ENCODE measurements at regions of chr16 and their contacts with region 1.

Region 1: DNA sequence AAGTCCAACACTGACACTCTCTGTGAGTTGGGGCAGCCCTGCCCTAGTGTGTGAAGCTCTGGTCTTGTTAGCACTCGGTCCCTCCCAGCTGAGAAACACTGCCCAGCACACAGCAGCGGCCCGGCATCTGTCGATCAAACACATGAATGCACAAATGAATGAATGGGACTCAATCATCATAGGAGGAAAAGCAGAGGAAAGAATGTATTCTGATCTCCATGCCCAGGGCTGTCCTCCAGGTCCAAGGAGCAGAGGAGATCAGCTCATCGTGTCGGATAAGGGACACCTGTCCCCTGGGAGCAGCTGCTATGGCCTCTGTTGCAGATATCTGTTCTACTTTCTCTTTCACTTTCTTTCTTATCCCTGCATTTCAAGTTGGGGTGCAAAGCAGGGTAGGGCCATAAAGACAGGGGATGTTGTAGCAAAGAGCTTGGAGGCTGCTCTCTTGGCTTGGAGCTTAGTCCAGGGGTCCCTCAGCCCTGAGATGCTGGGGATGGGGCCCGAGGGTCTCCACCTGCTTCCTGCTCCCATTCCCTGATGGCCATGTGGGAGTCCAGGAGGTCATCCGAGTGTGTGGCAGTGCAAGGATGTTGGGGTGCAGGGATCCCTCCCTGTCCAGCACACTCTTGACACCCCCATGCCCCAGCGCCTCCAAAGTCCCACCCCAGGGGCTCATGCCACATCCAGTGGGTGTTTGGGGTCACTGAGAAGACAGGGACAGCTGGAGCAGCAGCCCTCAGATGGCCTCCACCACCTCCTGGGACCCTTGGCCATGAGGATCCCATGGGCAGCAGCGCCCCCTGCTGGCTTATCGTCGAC is 88.2 kb downstream of the IRF8 start:
- DNase-seq: peak; percentile 50
- ATAC-seq: peak; percentile 51
- H3K4me3 Mint-ChIP-seq: no peak overlapping the region
- H3K27ac Mint-ChIP-seq: peak overlapping the region; percentile 69
- H3K4me1 Mint-ChIP-seq: peaks cover 55% of the 10 kb centered on the region
- H3K27me3 Mint-ChIP-seq: no peaks in the 10 kb centered on the region

Region 2: DNA sequence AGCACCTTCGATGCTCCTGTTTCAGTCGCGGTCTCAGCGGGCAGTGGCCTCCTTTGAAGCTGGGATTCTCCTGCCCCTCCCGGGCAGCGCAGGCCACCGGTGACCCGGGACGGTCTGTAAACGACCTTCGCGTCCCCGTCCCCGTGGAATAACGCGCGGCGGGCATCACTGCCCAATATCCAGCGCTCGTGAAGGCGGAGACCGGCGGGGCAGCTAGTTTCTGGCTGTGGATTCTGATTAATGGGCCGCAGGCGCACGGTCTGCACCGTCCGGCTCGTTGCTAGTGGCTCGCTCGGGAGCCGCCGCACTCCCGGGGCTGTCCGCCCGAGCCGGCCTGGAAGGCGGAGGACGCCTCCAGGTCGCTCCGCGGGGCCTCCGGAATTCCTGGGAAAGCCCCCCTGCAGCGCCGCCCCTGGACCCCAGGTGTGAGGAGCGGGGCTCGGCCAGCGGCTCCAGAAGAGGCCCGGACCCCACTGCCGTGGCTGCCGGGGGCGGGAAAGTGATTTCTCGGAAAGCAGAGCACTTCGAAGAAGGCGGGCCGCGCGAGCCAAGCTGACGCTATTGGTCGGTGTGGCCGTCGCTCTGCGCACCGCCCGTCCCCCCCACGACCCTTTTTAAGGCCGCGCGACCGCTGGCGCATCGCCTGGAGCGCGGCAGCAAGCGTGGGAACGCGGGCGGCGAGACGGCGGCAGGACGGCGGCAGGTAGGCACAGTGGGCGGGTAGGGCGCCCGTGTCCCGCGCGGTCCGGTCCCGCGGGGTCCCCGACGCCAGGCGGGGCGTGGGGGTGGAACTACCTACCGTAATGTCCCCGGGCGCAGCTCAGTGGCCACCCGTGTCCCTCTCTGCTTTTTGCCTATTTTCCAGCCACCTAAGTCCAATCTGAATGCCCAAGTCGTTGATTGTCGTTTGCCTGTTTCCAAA is 88.4 kb before region 1 on chr16 and contains the start of gene IRF8:
- CTCF ChIA-PET with region 1: interaction called, 20 read pairs
- POLR2A ChIA-PET with region 1: interaction called, 3 read pairs
- DNase-seq: peak; percentile 84
- ATAC-seq: peak; percentile 85
- H3K4me3 Mint-ChIP-seq: peak within 1 kb of the TSS; percentile 88
- H3K27ac Mint-ChIP-seq: peak within 1 kb of the TSS; percentile 76
- H3K4me1 Mint-ChIP-seq: peaks cover 50% of the 10 kb centered on the region
- H3K27me3 Mint-ChIP-seq: peaks cover 8% of the 10 kb centered on the region
- total RNA-seq, gene IRF8: 22.9 to 24.0 TPM

Region 3: DNA sequence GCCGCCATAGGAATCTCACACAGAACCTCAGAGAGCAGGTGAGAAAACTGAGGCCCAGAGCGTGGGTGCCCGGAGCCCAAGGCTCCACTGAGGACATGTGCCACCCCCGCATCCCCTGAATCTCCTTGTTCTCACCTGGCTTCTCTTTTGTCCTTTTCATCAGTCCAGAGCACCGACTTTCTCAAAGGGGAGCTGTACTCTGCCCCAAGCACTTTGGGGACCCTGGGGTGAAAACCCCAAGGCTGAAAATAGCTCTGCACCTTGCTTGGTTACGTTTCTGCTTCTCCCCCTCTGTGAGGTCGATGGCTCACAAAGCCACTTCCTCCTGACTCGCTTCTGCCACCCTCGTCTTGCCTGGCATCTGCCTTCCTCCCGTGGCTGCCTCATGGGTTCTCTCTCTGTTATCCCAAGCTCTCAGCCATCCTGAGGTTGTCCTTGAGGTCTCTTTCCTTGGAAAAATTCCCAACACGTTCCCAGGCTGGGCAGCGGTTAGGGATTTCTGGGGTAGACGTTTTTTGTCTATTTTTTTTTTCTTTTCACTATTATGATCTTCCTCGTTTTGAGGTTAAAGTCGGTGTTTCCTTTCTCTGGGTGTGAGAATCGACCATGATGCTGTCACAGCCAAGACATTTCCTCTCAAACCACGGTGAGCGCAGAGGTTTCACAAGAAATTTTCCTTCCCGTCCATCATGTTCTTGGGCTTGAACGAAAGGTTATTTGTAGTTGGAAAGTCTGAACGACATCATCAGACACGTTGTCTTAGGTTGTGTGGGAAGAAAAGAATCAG is 51.0 kb before region 1 on chr16:
- CTCF ChIA-PET with region 1: interaction called, 13 read pairs
- POLR2A ChIA-PET with region 1: interaction called, 3 read pairs
- DNase-seq: peak; percentile 86
- ATAC-seq: peak; percentile 92
- H3K4me3 Mint-ChIP-seq: peak overlapping the region; percentile 80
- H3K27ac Mint-ChIP-seq: peak overlapping the region; percentile 98
- H3K4me1 Mint-ChIP-seq: peaks cover 45% of the 10 kb centered on the region
- H3K27me3 Mint-ChIP-seq: no peaks in the 10 kb centered on the region

Region 4: DNA sequence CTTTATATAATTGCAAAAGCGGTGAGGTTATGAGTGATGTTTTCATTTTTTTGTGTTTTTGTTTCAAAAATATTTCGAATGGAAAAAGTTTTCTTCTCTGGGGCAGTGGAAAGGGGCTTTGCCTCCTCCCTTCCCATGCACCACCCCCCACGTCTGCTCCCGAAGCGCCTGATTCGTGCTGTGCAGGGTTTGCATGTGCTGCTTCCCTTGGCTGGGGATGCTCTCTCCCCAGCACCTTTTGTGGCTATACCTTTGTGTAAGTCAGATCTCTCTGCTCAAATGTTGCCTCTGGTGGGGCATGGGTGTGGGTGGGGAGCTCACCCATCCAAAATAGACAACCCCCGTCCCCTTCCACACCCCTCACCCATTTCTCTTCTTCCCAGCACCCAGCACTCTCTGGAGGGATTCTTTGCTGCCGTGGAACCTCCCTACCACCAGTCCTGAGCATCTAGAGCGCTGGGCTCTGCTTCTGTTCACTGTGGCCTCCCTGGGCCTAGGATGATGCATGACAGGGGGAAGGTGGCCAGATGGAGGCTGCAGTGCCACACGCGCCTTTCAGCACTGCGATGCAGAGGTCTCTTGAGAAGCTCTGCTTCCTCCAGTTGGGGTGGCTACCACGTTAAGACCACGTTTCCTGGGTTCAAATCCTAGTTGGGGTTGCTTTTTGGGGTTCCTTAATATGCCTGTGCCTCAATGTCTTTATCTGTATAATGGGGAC is 17.0 kb before region 1 on chr16:
- CTCF ChIA-PET with region 1: no interaction called
- POLR2A ChIA-PET with region 1: no interaction called
- DNase-seq: no peak
- ATAC-seq: no peak
- H3K4me3 Mint-ChIP-seq: no peak overlapping the region
- H3K27ac Mint-ChIP-seq: no peak overlapping the region
- H3K4me1 Mint-ChIP-seq: peaks cover 13% of the 10 kb centered on the region
- H3K27me3 Mint-ChIP-seq: no peaks in the 10 kb centered on the region

Region 5: DNA sequence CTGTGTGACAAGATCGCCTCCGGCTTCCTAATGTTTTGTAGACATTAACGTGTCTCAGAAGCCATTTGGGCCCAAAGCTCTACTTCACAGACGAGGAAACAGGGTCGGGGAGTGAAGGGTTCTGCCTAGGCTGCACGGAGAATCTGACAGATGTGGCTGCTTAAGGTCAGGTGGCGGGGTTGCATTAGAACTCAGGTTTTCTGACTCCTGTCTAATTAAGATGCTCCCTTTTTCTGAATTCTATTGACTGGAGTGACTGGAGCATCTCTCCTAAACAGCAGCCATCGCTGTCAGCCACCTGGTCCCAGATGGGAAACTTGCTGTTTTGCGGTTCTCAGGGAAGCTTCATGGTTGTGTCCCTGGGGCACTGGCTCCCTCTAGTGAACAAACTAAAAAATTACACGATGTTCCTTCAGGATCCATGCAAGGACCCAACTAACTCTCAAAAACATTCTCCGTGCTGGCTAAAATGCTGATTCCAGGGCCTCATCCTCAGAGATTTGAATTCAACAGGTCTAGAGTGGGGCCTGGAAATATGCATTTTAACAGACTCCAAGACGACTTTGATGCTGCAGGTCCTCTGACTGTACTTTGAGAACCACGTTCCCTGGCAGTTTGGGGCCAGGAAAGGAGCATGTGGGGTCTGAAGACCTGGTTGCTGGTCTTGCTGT is 29.2 kb after region 1 on chr16:
- CTCF ChIA-PET with region 1: interaction called, 18 read pairs
- POLR2A ChIA-PET with region 1: no interaction called
- DNase-seq: peak; percentile 50
- ATAC-seq: no peak
- H3K4me3 Mint-ChIP-seq: no peak overlapping the region
- H3K27ac Mint-ChIP-seq: no peak overlapping the region
- H3K4me1 Mint-ChIP-seq: peaks cover 16% of the 10 kb centered on the region
- H3K27me3 Mint-ChIP-seq: peaks cover 30% of the 10 kb centered on the region